Calu3 (cell line): ENCODE measurements at regions of chr1 and their contacts with region 1.

Region 1: DNA sequence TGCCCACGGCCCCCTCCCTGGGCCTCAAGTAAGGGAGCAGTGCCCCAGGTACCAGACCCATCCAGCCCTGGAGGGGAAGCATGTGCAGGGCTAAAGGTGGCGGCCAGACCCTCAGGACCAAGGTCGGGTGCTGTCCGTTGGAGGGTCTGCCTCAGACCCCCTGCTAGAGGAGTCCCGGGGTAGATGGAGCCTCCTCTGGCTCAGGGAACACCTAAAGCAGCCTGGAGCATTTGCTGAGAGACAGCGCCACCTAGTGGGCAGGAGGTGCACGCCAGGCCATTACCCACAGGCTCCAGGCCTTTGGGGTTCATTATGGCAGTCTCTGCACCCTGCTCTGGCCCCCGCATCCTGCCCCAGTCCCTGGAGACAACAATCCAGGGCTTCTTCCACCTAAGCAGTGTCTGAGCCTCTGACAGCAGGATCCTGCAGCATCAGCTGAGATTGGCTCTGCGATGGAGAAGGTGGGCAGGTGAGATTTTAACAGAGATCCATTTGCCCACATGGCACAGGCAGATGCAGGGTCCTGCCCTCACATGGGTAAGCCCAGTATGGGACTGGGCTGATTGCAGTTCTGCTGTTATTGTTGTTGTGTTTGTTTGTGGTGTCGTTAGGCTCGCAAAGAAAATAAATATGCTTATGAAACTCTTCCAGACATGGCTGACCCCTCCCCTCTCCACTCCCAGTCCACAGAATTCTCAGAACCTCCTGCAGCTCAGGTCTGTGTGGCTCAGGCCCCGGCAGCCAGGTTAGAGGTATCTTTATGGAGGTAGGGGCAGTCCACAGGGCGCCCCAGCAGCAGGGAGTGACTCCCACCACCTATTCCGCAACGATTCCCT is 42.4 kb downstream of the CTNNBIP1 start:
- DNase-seq: peak; percentile 79
- H3K4me3 Mint-ChIP-seq: no peak overlapping the region
- H3K27ac Mint-ChIP-seq: no peak overlapping the region
- H3K4me1 Mint-ChIP-seq: no peaks in the 10 kb centered on the region
- H3K27me3 Mint-ChIP-seq: no peaks in the 10 kb centered on the region
- CTCF ChIP-seq: peak; percentile 92

Region 2: GRCh38 chr1:9724706-9725476 is 142.7 kb before region 1 on chr1:
- CTCF ChIA-PET with region 1: no interaction called
- intact Hi-C with region 1: loop called (anchors 10 kb)
- DNase-seq: peak; percentile 69
- H3K4me3 Mint-ChIP-seq: no peak overlapping the region
- H3K27ac Mint-ChIP-seq: no peak overlapping the region
- H3K4me1 Mint-ChIP-seq: no peaks in the 10 kb centered on the region
- H3K27me3 Mint-ChIP-seq: no peaks in the 10 kb centered on the region
- CTCF ChIP-seq: peak; percentile 90

Region 3: DNA sequence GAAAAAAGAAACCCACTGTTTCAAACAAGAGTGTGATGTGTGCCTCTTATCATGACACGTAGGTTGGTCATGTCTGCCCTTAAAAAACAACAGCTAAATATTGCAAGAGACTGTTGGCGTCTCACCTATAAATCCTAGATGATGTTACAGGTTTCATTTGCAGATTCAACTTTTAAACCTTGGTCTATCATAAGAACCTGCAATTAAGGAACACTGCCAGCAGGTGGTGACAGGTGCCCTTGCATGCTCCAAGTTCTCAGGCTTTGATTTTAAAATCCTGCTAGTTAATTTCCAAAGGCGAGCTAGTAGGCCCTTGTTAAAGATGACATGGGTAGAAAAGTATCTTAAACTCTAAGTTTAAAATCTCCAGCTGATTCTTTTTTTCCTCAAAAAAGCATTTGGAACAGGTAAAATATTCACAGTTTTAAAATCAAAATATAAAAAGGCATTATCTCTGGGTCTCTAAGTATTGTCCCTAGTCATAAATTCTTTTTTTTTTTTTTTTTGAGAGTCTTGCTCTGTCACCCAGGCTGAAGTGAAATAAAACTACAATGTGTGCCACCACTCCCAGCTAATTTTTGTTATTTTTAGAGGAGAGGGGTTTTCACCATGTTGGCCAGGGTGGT is 83.0 kb before region 1 on chr1:
- CTCF ChIA-PET with region 1: interaction called, 6 read pairs
- intact Hi-C with region 1: loop called (anchors 1 kb)
- DNase-seq: peak; percentile 56
- H3K4me3 Mint-ChIP-seq: no peak overlapping the region
- H3K27ac Mint-ChIP-seq: no peak overlapping the region
- H3K4me1 Mint-ChIP-seq: no peaks in the 10 kb centered on the region
- H3K27me3 Mint-ChIP-seq: no peaks in the 10 kb centered on the region
- CTCF ChIP-seq: peak; percentile 54

Region 4: GRCh38 chr1:9825454-9826090 is 42.1 kb before region 1 on chr1:
- CTCF ChIA-PET with region 1: interaction called, 5 read pairs
- intact Hi-C with region 1: loop called (anchors 5 kb)
- DNase-seq: peak; percentile 82
- H3K4me3 Mint-ChIP-seq: peak overlapping the region; percentile 77
- H3K27ac Mint-ChIP-seq: peak overlapping the region; percentile 79
- H3K4me1 Mint-ChIP-seq: peaks cover 19% of the 10 kb centered on the region
- H3K27me3 Mint-ChIP-seq: no peaks in the 10 kb centered on the region
- CTCF ChIP-seq: no peak